Activated T-helper 2 cell treated with anti-CD3 and anti-CD28 coated beads, Interferon-gamma antibody, Interleukin-2, Interleukin-4, amounts not matched to agents 10 μg/mL and 5 μg/mL and 100 μg/mL, durations not matched to agents 14 hours and 24 hours and 36 hours (primary cell): ENCODE measurements at regions of chr18 and their contacts with region 1.

Region 1: GRCh38 chr18:58768293-58768974 is 96.2 kb upstream of the ZNF532 start:
- DNase-seq: peak; percentile 55
- H3K4me3 Mint-ChIP-seq: no peak overlapping the region
- H3K27ac Mint-ChIP-seq: no peak overlapping the region
- H3K4me1 Mint-ChIP-seq: peaks cover 15% of the 10 kb centered on the region
- H3K27me3 Mint-ChIP-seq: peaks cover 38% of the 10 kb centered on the region

Region 2: GRCh38 chr18:58400337-58400870 is 368.0 kb before region 1 on chr18:
- intact Hi-C with region 1: loop called (anchors 2 kb)
- DNase-seq: no peak
- H3K4me3 Mint-ChIP-seq: no peak overlapping the region
- H3K27ac Mint-ChIP-seq: peak overlapping the region; percentile 49
- H3K4me1 Mint-ChIP-seq: no peaks in the 10 kb centered on the region
- H3K27me3 Mint-ChIP-seq: peaks cover 2% of the 10 kb centered on the region

Region 3: DNA sequence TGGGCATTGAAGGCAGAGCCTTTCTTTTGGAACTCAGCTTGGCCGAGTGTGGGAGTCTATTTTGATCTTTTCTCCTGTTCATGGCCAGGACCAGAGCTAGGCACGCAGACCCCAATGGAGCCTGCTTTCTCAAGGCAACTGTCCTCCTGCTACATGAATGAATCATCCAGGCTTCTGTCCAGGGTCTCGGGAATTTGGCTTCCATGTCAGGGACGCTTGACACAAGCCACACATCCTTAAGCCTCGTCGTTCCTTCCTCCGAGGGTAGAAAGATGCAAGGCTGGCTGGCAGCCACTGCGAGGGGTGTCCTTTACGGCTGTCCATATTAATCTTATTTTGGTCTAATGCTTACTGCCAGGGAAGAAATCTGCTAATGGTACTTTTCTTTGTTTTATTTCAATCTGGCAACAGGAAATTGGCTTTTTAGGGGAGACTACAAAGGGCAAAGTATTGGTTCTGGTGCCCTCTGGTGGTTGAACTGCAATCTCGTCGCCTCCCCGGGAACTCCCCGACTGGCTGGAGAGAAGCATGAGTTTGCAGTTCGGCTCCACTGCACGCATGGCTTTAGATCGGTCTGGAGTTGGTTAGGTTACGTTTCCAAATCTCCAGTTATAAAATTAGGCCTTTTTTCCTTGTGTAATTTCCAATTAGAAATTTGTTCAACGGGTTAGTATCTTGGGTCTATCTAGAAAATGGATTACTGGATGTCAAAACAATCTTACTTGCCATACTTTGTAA is 274.7 kb before region 1 on chr18:
- intact Hi-C with region 1: loop called (anchors 1 kb)
- DNase-seq: peak; percentile 58
- H3K4me3 Mint-ChIP-seq: no peak overlapping the region
- H3K27ac Mint-ChIP-seq: no peak overlapping the region
- H3K4me1 Mint-ChIP-seq: peaks cover 9% of the 10 kb centered on the region
- H3K27me3 Mint-ChIP-seq: peaks cover 26% of the 10 kb centered on the region

Region 4: GRCh38 chr18:58529714-58530354 is 238.6 kb before region 1 on chr18:
- intact Hi-C with region 1: loop called (anchors 1 kb)
- DNase-seq: peak; percentile 36
- H3K4me3 Mint-ChIP-seq: no peak overlapping the region
- H3K27ac Mint-ChIP-seq: no peak overlapping the region
- H3K4me1 Mint-ChIP-seq: peaks cover 30% of the 10 kb centered on the region
- H3K27me3 Mint-ChIP-seq: peaks cover 15% of the 10 kb centered on the region

Region 5: GRCh38 chr18:58615140-58616132 is 153.0 kb before region 1 on chr18:
- intact Hi-C with region 1: loop called (anchors 10 kb)
- DNase-seq: peak; percentile 64
- H3K4me3 Mint-ChIP-seq: peak overlapping the region; percentile 26
- H3K27ac Mint-ChIP-seq: peak overlapping the region; percentile 85
- H3K4me1 Mint-ChIP-seq: peaks cover 34% of the 10 kb centered on the region
- H3K27me3 Mint-ChIP-seq: peaks cover 27% of the 10 kb centered on the region

Region 6: DNA sequence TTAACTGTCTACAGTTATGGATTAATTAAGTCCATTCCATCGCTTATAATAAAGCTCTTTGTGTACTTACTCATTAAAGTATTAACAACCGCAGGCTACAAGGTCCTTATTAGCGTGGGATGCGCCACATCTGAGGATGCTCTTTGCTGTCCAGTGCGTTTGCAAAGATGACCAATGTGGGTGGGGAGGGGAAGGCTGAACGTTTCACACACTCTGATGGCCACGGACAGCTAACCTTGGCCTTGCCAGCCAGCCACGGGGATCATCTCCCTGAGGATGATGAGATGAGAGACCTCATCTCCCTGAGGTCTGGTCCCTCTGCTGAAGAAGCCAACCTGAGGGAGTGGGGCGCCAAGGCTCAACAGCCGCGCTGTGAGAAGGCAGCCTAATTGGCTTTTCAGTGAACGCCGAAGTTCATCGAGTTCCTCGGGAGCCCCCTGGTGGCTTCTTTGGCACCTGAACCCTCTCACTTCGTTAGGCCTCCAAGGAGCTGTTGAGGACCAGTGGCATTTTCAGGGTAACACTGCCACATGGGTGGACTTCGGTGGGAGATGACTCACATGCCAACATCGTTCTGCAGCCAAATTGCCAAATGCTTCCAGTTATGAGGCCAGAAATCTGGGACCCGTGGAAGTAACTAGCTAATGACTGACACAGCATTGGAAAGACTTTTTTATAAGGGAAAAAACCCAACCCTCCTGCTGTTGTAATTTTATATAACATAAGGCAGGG is 301.9 kb after region 1 on chr18:
- intact Hi-C with region 1: loop called (anchors 1 kb)
- DNase-seq: peak; percentile 65
- H3K4me3 Mint-ChIP-seq: no peak overlapping the region
- H3K27ac Mint-ChIP-seq: no peak overlapping the region
- H3K4me1 Mint-ChIP-seq: peaks cover 5% of the 10 kb centered on the region
- H3K27me3 Mint-ChIP-seq: peaks cover 13% of the 10 kb centered on the region